T-cell (primary cell): ENCODE measurements at regions of chr1 and their contacts with region 1.

Region 1: GRCh38 chr1:150089846-150090520 is 22.4 kb downstream of the VPS45 start:
- DNase-seq: no peak
- ATAC-seq: no peak
- H3K4me3 ChIP-seq: no peak overlapping the region
- H3K4me3 Mint-ChIP-seq: no peak overlapping the region
- H3K27ac ChIP-seq: no peak overlapping the region
- H3K27ac Mint-ChIP-seq: peak overlapping the region in 1 of 2 donors; percentile 7
- H3K4me1 ChIP-seq: peaks cover 3 to 6% of the 10 kb centered on the region in 2 experiments
- H3K4me1 Mint-ChIP-seq: peaks cover 13 to 32% (median 26%) of the 10 kb centered on the region in 3 donors
- H3K27me3 ChIP-seq: no peaks in the 10 kb centered on the region
- H3K27me3 Mint-ChIP-seq: no peaks in the 10 kb centered on the region

Region 2: DNA sequence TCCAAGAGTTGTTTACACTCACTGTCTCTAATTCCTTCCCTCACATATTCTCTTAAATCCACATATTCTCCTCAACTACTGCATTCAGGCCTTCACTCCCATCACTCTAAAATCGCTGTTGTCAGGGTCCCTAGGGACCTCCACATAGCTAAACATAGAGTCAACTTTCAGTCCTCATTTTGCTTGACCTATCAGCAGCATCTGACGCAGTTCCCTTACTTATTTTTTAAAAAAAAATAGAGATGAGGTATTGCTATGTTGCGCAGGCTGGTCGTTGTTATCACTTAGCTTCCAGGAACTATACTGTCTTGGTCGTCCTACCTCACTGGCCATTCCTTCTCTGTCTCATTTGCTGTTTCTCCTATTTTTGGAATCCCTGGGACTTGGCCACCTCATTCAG is 48.1 kb after region 1 on chr1:
- CTCF ChIA-PET with region 1: no interaction called
- POLR2A ChIA-PET with region 1: interaction called in 1 of 2 experiments, 12 read pairs
- DNase-seq: no peak
- ATAC-seq: no peak
- H3K4me3 ChIP-seq: no peak overlapping the region
- H3K4me3 Mint-ChIP-seq: no peak overlapping the region
- H3K27ac ChIP-seq: no peak overlapping the region
- H3K27ac Mint-ChIP-seq: no peak overlapping the region
- H3K4me1 ChIP-seq: no peaks in the 10 kb centered on the region
- H3K4me1 Mint-ChIP-seq: peaks cover 0 to 5% (median 0%) of the 10 kb centered on the region in 3 donors
- H3K27me3 ChIP-seq: no peaks in the 10 kb centered on the region
- H3K27me3 Mint-ChIP-seq: no peaks in the 10 kb centered on the region